ENCODE measurements at regions of chr19 and their contacts with region 1.

Region 1: GRCh38 chr19:14571695-14572490 is at the start of gene NDUFB7:
- DNase-seq: peak; percentile 96
- H3K4me3 ChIP-seq: peak within 1 kb of the TSS; percentile 63 to 94 (median 82)
- H3K27ac ChIP-seq: peak within 1 kb of the TSS; percentile 70 to 87 (median 83)
- H3K4me1 ChIP-seq: peaks cover 0 to 38% (median 36%) of the 10 kb centered on the region in 4 donors
- H3K27me3 ChIP-seq: no peaks in the 10 kb centered on the region
- CTCF ChIP-seq: peak in 3 of 4 experiments; percentile 54 to 76 (median 60)
- EP300 ChIP-seq: no peak
- POLR2A ChIP-seq: peak; percentile 59 to 60
- total RNA-seq, gene NDUFB7: 475 to 652 (median 564) TPM

Region 2: GRCh38 chr19:14529254-14530004 is 42.5 kb before region 1 on chr19 and contains the start of gene TECR:
- intact Hi-C with region 1: loop called (anchors 2 kb)
- DNase-seq: peak; percentile 100
- H3K4me3 ChIP-seq: peak within 1 kb of the TSS; percentile 68 to 77 (median 74)
- H3K27ac ChIP-seq: peak within 1 kb of the TSS; percentile 90 to 97 (median 94)
- H3K4me1 ChIP-seq: peaks cover 0 to 14% (median 12%) of the 10 kb centered on the region in 4 donors
- H3K27me3 ChIP-seq: no peaks in the 10 kb centered on the region
- CTCF ChIP-seq: no peak
- EP300 ChIP-seq: no peak
- POLR2A ChIP-seq: peak; percentile 91 to 98
- total RNA-seq, gene TECR: 20.6 to 34.2 (median 30.0) TPM

Region 3: GRCh38 chr19:14595516-14595915 is 23.6 kb after region 1 on chr19:
- intact Hi-C with region 1: no loop called
- DNase-seq: no peak
- H3K4me3 ChIP-seq: no peak overlapping the region
- H3K27ac ChIP-seq: no peak overlapping the region
- H3K4me1 ChIP-seq: no peaks in the 10 kb centered on the region
- H3K27me3 ChIP-seq: no peaks in the 10 kb centered on the region
- CTCF ChIP-seq: no peak
- EP300 ChIP-seq: no peak
- POLR2A ChIP-seq: no peak

Region 4: GRCh38 chr19:14689598-14690503 is 118.0 kb after region 1 on chr19 and contains the start of gene ZNF333:
- intact Hi-C with region 1: loop called (anchors 1 kb)
- DNase-seq: peak; percentile 98
- H3K4me3 ChIP-seq: peak within 1 kb of the TSS; percentile 62 to 97 (median 69)
- H3K27ac ChIP-seq: peak within 1 kb of the TSS; percentile 86 to 94 (median 90)
- H3K4me1 ChIP-seq: peaks cover 0 to 22% (median 13%) of the 10 kb centered on the region in 4 donors
- H3K27me3 ChIP-seq: no peaks in the 10 kb centered on the region
- CTCF ChIP-seq: no peak
- EP300 ChIP-seq: no peak
- POLR2A ChIP-seq: no peak
- total RNA-seq, gene ZNF333: 27.2 to 55.4 (median 46.1) TPM

Region 5: DNA sequence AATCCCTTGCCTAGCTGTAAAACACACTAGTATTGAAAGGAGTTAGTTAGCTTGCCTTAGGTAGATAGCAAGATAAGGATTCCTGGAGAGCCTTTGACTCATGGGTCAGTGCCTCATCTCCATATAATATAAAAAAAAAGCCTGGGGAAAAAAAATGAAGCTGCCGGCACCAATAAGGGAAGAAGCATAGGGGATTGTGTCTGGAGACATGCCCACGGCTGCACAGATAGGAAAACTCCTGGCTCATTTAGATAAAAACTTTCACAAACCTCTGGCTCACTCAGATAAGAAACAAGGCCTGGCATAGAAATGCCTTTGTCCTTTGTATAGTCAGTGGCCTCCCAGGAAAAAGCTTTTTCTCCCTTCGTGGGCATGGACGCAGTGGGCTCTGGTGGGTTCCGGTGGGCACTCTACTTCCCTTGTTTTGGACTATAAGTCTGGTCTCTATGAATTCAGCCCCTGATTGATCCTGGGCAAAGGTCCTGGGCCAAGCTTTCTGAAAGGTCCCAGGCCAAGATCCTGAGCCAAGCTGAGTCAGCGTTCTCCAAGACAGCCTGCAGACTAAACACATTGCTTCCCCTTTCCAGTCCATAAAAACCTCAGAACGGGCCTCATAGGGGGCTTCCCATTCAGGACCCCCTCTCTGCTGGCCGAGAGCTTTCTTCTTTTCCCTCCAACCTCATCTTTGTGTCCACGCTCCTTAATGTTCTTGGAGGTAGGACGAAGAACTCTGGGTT is 318.9 kb after region 1 on chr19:
- intact Hi-C with region 1: loop called (anchors 1 kb)
- DNase-seq: peak; percentile 62
- H3K4me3 ChIP-seq: no peak overlapping the region
- H3K27ac ChIP-seq: no peak overlapping the region
- H3K4me1 ChIP-seq: peaks cover 0 to 5% (median 0%) of the 10 kb centered on the region in 4 donors
- H3K27me3 ChIP-seq: peaks cover 0 to 15% (median 3%) of the 10 kb centered on the region in 3 donors
- CTCF ChIP-seq: no peak
- EP300 ChIP-seq: no peak
- POLR2A ChIP-seq: no peak

Region 6: DNA sequence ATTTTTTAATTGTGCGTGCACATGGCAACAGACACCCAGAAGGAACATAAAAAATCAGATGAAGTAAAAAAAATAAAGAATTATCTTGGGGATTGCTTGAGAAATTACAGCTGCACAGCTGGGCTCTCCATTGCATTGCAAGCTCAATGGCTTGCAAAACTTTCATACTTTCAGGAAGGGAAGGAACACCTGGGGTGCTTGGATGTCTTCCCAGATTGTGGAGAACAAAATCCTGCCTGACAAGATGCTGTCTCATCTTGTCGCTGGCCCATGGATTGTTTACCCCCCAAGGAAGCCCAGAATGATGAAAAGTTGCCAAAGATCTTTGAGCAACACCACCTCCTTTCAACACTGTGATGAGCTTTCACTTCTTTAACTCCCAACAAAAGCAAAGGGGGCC is 466.4 kb after region 1 on chr19:
- intact Hi-C with region 1: no loop called
- DNase-seq: no peak
- H3K4me3 ChIP-seq: no peak overlapping the region
- H3K27ac ChIP-seq: no peak overlapping the region
- H3K4me1 ChIP-seq: no peaks in the 10 kb centered on the region
- H3K27me3 ChIP-seq: peaks cover 0 to 24% (median 0%) of the 10 kb centered on the region in 3 donors
- CTCF ChIP-seq: no peak
- EP300 ChIP-seq: no peak
- POLR2A ChIP-seq: no peak

Measured in sigmoid colon (tissue), 7 donors.